Activated T-helper 1 cell treated with anti-CD3 and anti-CD28 coated beads, Interleukin-12 subunit alpha, Interleukin-12 subunit beta, Interleukin-2, Interleukin-4 antibody, amounts not matched to agents 30 ng/mL and 10 ng/mL and 1 ng/mL, durations not matched to agents 14 hours and 24 hours and 36 hours (primary cell): ENCODE measurements at regions of chr1 and their contacts with region 1.

Region 1: GRCh38 chr1:33094971-33095604 is 14.1 kb downstream of the AZIN2 start:
- DNase-seq: no peak
- H3K4me3 Mint-ChIP-seq: no peak overlapping the region
- H3K27ac Mint-ChIP-seq: no peak overlapping the region
- H3K4me1 Mint-ChIP-seq: peaks cover 57% of the 10 kb centered on the region
- H3K27me3 Mint-ChIP-seq: no peaks in the 10 kb centered on the region

Region 2: DNA sequence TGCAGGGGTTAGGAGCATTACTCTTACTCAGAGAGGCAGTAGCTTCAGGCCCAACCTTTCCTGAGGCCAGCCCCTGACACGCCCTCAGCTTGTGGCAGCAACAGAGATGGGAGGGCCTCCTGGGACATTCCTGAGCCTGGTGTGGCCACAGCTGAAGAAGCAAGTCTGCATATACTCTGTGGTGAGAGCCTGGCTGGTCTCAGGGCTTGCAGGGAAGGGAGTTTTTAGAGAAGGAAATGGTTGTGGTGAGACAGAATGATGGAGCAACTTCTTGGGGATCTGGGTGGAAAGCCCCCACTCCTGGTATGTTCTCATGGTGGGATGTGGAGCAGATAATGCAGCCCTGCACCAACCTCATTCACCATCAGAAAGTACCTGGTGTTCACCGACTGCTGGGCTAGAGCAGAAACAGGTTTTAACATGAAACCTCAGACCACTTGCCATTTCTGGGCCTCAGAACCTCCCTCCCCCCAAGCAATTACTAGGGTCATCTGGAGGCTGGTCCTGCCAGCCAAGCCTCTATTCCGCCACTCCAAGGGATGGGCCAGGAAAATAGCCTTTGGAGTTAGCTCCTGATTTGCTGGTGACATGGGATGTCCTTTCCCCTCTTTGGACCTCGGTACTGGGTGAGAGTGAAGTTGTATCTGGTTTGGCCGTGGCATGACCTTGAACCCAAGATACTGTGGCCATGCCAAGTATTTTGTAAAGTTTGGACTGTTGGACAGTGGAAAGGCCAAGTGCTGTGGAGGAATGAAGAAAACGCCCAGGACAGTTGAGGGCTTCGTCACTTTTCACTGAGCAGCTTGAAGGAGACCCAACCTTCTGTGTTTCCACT is 102.4 kb before region 1 on chr1:
- intact Hi-C with region 1: loop called (anchors 5 kb)
- DNase-seq: peak; percentile 81
- H3K4me3 Mint-ChIP-seq: peak overlapping the region; percentile 31
- H3K27ac Mint-ChIP-seq: peak overlapping the region; percentile 87
- H3K4me1 Mint-ChIP-seq: peaks cover 83% of the 10 kb centered on the region
- H3K27me3 Mint-ChIP-seq: no peaks in the 10 kb centered on the region

Region 3: DNA sequence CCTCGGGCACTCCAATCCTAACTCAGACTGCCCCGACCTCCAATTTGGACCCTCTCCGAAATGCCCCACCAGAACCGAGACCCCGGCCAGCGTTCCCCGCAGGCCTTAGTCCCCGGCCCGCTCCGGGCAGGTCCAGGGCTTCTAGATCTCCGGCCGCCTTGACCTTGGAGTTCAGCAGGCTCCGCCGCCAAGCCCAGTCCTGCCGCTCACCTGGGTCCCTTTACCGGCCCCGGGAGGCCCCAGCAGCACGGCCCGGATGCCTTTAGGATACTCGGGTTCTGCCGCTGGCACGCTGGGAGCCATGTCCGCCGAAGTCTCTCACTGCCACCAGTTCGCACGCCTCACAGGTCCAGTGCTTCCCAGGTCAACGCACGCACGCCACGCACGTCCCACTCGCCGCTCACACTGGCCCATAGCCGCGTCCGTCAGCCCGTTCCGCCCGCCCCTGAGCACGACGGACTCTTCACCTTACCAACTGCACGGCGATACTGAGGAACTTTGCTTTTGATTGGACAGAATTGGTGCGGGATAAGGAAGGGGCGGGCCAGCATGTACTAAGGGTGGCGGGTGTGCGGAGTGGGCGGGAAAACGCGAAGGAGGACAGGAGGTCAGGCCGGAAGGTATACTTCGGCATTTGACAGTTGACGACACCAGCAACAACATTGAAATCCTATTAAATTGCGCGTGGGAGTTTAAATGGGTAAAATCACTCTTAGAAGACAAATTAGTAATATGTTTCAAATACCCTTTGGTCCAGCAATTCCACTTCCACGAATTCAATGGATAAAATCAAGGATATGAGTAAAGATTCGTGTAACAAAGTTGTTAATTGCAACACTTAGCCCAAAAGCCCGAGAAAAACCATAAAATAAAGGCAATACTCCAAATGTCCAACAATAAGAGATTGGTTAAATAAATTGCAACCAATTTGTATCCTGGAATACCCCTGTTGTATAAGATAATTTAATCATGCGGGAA is 58.3 kb before region 1 on chr1 and contains the start of gene AK2:
- intact Hi-C with region 1: loop called (anchors 5 kb)
- DNase-seq: peak; percentile 91
- H3K4me3 Mint-ChIP-seq: peak within 1 kb of the TSS; percentile 91
- H3K27ac Mint-ChIP-seq: peak within 1 kb of the TSS; percentile 90
- H3K4me1 Mint-ChIP-seq: peaks cover 48% of the 10 kb centered on the region
- H3K27me3 Mint-ChIP-seq: no peaks in the 10 kb centered on the region
- total RNA-seq, gene AK2: 387 and 400 TPM in 2 replicates

Region 4: DNA sequence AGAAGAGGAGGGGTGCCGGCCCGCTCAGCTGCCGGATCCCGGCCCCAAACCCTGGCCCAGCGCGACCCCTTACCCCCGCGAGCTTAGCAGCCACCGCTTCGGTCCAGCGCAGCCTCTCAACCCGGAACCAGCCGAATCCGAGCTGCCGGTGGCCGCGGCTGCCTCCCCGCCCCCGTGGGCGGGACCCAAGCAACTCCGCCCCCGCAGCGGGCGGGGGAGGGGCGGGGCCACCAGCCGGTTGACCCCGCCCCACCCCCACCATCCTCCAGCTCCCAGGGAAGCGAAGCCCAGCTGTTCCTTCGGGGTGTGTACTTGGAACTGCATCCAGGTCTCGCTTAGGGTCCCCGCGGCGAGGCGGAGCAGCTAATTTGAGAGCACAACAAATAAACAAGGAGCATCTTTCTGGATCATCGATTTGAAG is 86.8 kb after region 1 on chr1 and contains the start of gene TRIM62:
- intact Hi-C with region 1: loop called (anchors 2 kb)
- DNase-seq: peak; percentile 69
- H3K4me3 Mint-ChIP-seq: peak within 1 kb of the TSS; percentile 87
- H3K27ac Mint-ChIP-seq: peak within 1 kb of the TSS; percentile 81
- H3K4me1 Mint-ChIP-seq: peaks cover 28% of the 10 kb centered on the region
- H3K27me3 Mint-ChIP-seq: peaks cover 19% of the 10 kb centered on the region
- total RNA-seq, gene TRIM62: 4.1 and 4.5 TPM in 2 replicates

Region 5: GRCh38 chr1:33256701-33257399 is 161.8 kb after region 1 on chr1:
- intact Hi-C with region 1: loop called (anchors 2 kb)
- DNase-seq: peak; percentile 41
- H3K4me3 Mint-ChIP-seq: peak overlapping the region; percentile 92
- H3K27ac Mint-ChIP-seq: peak overlapping the region; percentile 98
- H3K4me1 Mint-ChIP-seq: peaks cover 34% of the 10 kb centered on the region
- H3K27me3 Mint-ChIP-seq: peaks cover 11% of the 10 kb centered on the region